ENCODE measurements at regions of chr20 and their contacts with region 1.

Region 1: GRCh38 chr20:52150440-52151258 is 40.9 kb downstream of the ZFP64 start:
- DNase-seq: peak in 3 of 9 experiments; percentile 20 to 53 (median 44)
- ATAC-seq: no peak
- H3K4me3 ChIP-seq: no peak overlapping the region
- H3K4me3 Mint-ChIP-seq: no peak overlapping the region
- H3K27ac ChIP-seq: no peak overlapping the region
- H3K27ac Mint-ChIP-seq: no peak overlapping the region
- H3K4me1 ChIP-seq: no peaks in the 10 kb centered on the region
- H3K4me1 Mint-ChIP-seq: no peaks in the 10 kb centered on the region
- H3K27me3 ChIP-seq: no peaks in the 10 kb centered on the region
- H3K27me3 Mint-ChIP-seq: no peaks in the 10 kb centered on the region
- CTCF ChIP-seq: peak; percentile 96

Region 2: GRCh38 chr20:51372176-51372803 is 778.4 kb before region 1 on chr20:
- CTCF ChIA-PET with region 1: no interaction called
- POLR2A ChIA-PET with region 1: no interaction called
- intact Hi-C with region 1: loop called in 1 of 2 experiments (anchors 2 kb)
- DNase-seq: peak; percentile 22 to 77 (median 58)
- ATAC-seq: peak; percentile 62
- H3K4me3 ChIP-seq: no peak overlapping the region
- H3K4me3 Mint-ChIP-seq: no peak overlapping the region
- H3K27ac ChIP-seq: no peak overlapping the region
- H3K27ac Mint-ChIP-seq: no peak overlapping the region
- H3K4me1 ChIP-seq: no peaks in the 10 kb centered on the region
- H3K4me1 Mint-ChIP-seq: peaks cover 5% of the 10 kb centered on the region
- H3K27me3 ChIP-seq: no peaks in the 10 kb centered on the region
- H3K27me3 Mint-ChIP-seq: no peaks in the 10 kb centered on the region
- CTCF ChIP-seq: peak; percentile 60

Region 3: DNA sequence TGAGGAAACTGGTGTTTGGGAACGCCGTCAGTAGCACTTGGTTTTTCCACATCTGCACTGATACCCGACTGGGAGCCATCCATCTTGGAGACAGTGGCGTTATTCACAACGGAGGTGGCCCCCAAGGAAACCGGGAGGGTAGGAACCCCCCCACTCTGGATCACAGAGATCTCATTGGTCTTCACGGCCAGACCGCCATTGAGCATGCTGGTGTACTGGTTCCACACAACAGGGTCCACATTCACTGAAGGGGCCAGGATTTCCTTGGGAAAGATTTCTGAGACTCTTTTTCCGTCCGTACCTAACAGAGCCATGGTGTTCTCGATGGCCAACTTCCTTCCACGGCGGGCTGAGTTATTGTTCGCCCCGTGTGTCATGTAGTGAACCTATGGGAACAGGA is 366.4 kb before region 1 on chr20:
- CTCF ChIA-PET with region 1: no interaction called
- POLR2A ChIA-PET with region 1: no interaction called
- intact Hi-C with region 1: no loop called
- DNase-seq: no peak
- ATAC-seq: no peak
- H3K4me3 ChIP-seq: no peak overlapping the region
- H3K4me3 Mint-ChIP-seq: no peak overlapping the region
- H3K27ac ChIP-seq: no peak overlapping the region
- H3K27ac Mint-ChIP-seq: no peak overlapping the region
- H3K4me1 ChIP-seq: no peaks in the 10 kb centered on the region
- H3K4me1 Mint-ChIP-seq: no peaks in the 10 kb centered on the region
- H3K27me3 ChIP-seq: no peaks in the 10 kb centered on the region
- H3K27me3 Mint-ChIP-seq: no peaks in the 10 kb centered on the region
- CTCF ChIP-seq: no peak

Region 4: DNA sequence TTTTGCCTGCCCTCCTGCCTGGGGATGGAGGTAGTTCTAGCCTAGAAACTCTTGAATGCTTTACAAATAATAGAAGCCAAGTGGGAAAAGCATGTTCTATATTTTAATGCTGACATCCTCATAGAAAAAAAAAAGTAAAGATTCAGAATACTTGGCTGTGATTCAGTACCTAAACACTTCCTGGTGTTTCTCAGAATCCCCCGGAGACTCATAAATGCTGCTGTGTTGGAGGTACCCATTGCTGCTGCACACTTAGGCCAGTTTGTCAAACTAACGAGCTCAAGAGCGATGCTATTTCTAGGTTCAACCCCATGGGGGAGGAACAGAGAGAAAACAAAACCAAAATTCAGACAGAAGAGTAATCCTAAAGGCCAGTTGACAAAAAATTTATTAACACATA is 79.8 kb after region 1 on chr20:
- CTCF ChIA-PET with region 1: no interaction called
- POLR2A ChIA-PET with region 1: no interaction called
- intact Hi-C with region 1: no loop called
- DNase-seq: no peak
- ATAC-seq: no peak
- H3K4me3 ChIP-seq: no peak overlapping the region
- H3K4me3 Mint-ChIP-seq: no peak overlapping the region
- H3K27ac ChIP-seq: no peak overlapping the region
- H3K27ac Mint-ChIP-seq: no peak overlapping the region
- H3K4me1 ChIP-seq: no peaks in the 10 kb centered on the region
- H3K4me1 Mint-ChIP-seq: no peaks in the 10 kb centered on the region
- H3K27me3 ChIP-seq: peaks cover 0 to 4% of the 10 kb centered on the region in 2 experiments
- H3K27me3 Mint-ChIP-seq: peaks cover 13% of the 10 kb centered on the region
- CTCF ChIP-seq: no peak